ENCODE measurements at regions of chr17 and their contacts with region 1.

Region 1: GRCh38 chr17:81253358-81254131 is 14.4 kb downstream of the NDUFAF8 start:
- DNase-seq: peak; percentile 86
- H3K4me3 Mint-ChIP-seq: no peak overlapping the region
- H3K27ac Mint-ChIP-seq: peak overlapping the region; percentile 3
- H3K4me1 Mint-ChIP-seq: peaks cover 10% of the 10 kb centered on the region
- H3K27me3 Mint-ChIP-seq: no peaks in the 10 kb centered on the region

Region 2: DNA sequence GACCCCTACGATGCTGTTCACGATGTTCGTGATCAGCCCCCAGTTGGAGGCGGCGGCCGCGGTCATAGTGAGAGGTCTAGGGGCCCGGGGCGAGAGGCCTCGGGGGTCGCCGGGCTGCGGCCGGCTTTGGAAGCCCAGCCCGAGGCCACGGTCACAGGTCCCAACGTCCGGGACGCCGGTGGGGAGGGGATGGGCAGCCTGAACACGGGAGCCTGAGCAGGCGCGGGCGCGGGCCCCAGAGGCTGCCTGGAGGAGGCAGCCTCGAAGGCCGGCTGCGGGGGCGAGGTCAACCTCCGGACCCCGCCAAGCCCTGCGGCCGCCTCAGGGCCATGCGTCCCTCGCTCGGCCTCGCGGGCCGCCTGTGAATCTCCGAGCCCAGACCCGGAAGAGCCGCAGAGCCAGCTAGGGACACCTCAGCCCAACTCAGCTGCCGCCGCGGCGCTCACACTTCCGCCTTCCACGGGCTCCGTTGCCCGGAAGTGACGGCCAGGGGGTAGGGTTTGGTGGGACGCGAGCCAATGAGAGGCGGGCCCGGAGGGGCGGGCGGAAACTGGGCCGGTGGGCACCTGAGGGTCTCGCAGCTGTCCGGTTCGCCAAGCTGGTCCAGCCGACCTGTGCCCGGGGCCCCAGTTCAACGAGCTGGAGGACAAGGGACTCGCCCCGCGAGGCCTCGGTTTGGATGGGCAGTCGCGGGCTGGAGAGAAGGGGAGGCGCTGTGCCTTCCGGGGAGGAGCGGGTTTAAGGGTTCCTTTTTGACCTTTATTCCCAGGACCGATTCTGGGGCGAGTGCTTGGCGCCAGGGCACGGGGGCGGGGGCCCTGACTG is 41.5 kb after region 1 on chr17 and contains the start of gene SLC38A10:
- intact Hi-C with region 1: loop called (anchors 1 kb)
- DNase-seq: peak; percentile 99
- H3K4me3 Mint-ChIP-seq: peak within 1 kb of the TSS; percentile 98
- H3K27ac Mint-ChIP-seq: peak within 1 kb of the TSS; percentile 96
- H3K4me1 Mint-ChIP-seq: peaks cover 27% of the 10 kb centered on the region
- H3K27me3 Mint-ChIP-seq: no peaks in the 10 kb centered on the region
- total RNA-seq, gene SLC38A10: 98.0 and 105 TPM in 2 replicates

Region 3: GRCh38 chr17:81328978-81329919 is 75.7 kb after region 1 on chr17:
- intact Hi-C with region 1: loop called (anchors 10 kb)
- DNase-seq: no peak
- H3K4me3 Mint-ChIP-seq: no peak overlapping the region
- H3K27ac Mint-ChIP-seq: no peak overlapping the region
- H3K4me1 Mint-ChIP-seq: no peaks in the 10 kb centered on the region
- H3K27me3 Mint-ChIP-seq: no peaks in the 10 kb centered on the region

Region 4: GRCh38 chr17:81387100-81388090 is 133.8 kb after region 1 on chr17:
- intact Hi-C with region 1: loop called (anchors 5 kb)
- DNase-seq: peak; percentile 87
- H3K4me3 Mint-ChIP-seq: peak overlapping the region; percentile 81
- H3K27ac Mint-ChIP-seq: peak overlapping the region; percentile 69
- H3K4me1 Mint-ChIP-seq: peaks cover 5% of the 10 kb centered on the region
- H3K27me3 Mint-ChIP-seq: peaks cover 44% of the 10 kb centered on the region

Region 5: GRCh38 chr17:81428948-81429774 is 175.6 kb after region 1 on chr17:
- intact Hi-C with region 1: no loop called
- DNase-seq: no peak
- H3K4me3 Mint-ChIP-seq: no peak overlapping the region
- H3K27ac Mint-ChIP-seq: no peak overlapping the region
- H3K4me1 Mint-ChIP-seq: no peaks in the 10 kb centered on the region
- H3K27me3 Mint-ChIP-seq: peaks cover 15% of the 10 kb centered on the region

Region 6: DNA sequence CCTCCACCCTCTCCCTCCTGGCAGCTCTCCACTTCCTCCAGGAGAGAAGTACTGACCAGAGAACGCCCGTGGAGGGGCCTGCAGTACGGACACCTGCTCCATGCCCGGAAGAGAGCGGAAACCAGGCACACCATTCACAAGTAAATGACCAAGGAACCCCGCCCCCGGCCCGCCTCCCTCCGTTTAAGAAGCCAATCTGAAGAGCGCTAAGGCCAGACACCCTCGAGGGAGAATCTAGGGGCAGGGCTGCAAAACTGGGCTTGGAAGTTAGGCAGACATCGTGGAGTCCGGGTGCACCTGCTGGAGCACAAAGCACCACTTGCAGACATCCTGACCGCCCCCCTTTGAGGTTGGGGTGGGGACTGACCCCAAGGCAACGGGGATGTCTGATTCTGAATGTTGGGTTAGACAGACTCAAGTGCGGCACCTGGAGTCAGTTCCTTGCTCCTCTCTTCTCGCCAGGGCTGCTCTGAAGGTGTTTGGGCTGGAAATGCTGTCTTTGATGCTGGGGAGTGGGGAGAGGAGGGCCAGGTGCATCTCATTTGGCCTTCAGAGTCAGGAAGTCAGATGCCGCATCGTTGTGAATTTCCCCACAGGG is 299.6 kb after region 1 on chr17:
- intact Hi-C with region 1: loop called (anchors 5 kb)
- DNase-seq: peak; percentile 92
- H3K4me3 Mint-ChIP-seq: peak overlapping the region; percentile 91
- H3K27ac Mint-ChIP-seq: peak overlapping the region; percentile 94
- H3K4me1 Mint-ChIP-seq: peaks cover 24% of the 10 kb centered on the region
- H3K27me3 Mint-ChIP-seq: no peaks in the 10 kb centered on the region

Measured in activated CD4-positive, alpha-beta T cell treated with anti-CD3 and anti-CD28 coated beads, Interleukin-2, amount 10 ng/mL, durations not matched to agents 24 days and 14 days (primary cell).